ENCODE measurements at regions of chr14 and their contacts with region 1.

Region 1: DNA sequence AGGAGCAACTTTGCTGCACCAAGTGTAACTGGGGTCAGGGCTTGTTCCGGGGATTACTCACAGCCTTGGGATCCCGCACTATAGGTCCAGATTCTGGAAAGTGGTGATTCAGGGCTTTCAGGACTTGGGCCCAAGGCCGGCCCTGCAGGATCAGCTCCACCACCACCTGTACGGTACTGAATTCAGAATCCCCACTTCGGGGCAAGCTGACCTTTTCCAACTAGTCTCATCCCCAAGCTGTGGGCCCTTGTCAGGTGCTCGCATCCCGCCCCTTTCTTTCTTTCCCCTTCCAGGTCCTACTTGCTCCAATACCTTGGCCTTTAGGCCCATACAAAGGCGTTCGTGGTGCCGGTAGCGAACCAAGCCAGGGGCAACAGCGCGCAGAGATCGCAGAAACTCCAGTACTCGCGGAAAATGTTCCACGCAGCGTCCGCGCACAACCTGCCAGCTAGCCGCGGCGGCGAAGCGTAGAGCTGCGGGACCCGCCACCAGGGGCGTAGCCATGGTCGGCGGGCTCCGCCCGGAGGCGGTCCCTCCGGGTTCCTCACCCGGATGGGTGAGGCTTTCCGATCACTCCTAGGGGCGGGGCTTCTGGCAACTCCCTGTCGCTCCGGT is 487 bp downstream of the TINF2 start:
- DNase-seq: peak; percentile 96
- H3K4me3 ChIP-seq: peak overlapping the region; percentile 82
- H3K27ac ChIP-seq: peak overlapping the region; percentile 90
- H3K4me1 ChIP-seq: peaks cover 28% of the 10 kb centered on the region
- CTCF ChIP-seq: peak; percentile 35; the same call in 1 of the 2 replicates

Region 2: GRCh38 chr14:24013654-24014514 is 228.1 kb before region 1 on chr14:
- CTCF ChIA-PET with region 1: no interaction called
- POLR2A ChIA-PET with region 1: no interaction called
- intact Hi-C with region 1: loop called (anchors 5 kb)
- DNase-seq: peak; percentile 82
- H3K4me3 ChIP-seq: no peak overlapping the region
- H3K27ac ChIP-seq: no peak overlapping the region
- H3K4me1 ChIP-seq: peaks cover 12% of the 10 kb centered on the region
- CTCF ChIP-seq: peak; percentile 90

Region 3: GRCh38 chr14:24160850-24161804 is 80.8 kb before region 1 on chr14 and contains the start of gene IRF9:
- CTCF ChIA-PET with region 1: no interaction called
- POLR2A ChIA-PET with region 1: no interaction called
- intact Hi-C with region 1: no loop called
- DNase-seq: peak; percentile 95
- H3K4me3 ChIP-seq: peak within 1 kb of the TSS; percentile 70
- H3K27ac ChIP-seq: peak within 1 kb of the TSS; percentile 68
- H3K4me1 ChIP-seq: peaks cover 16% of the 10 kb centered on the region
- CTCF ChIP-seq: peak; percentile 95
- total RNA-seq, gene IRF9: 35.1 and 40.7 TPM in 2 replicates

Region 4: GRCh38 chr14:24215495-24216344 is 26.2 kb before region 1 on chr14 and contains the start of gene MDP1:
- CTCF ChIA-PET with region 1: interaction called, 3 read pairs
- POLR2A ChIA-PET with region 1: interaction called, 12 read pairs
- intact Hi-C with region 1: no loop called
- DNase-seq: peak; percentile 93
- H3K4me3 ChIP-seq: peak within 1 kb of the TSS; percentile 76
- H3K27ac ChIP-seq: peak within 1 kb of the TSS; percentile 70
- H3K4me1 ChIP-seq: peaks cover 28% of the 10 kb centered on the region
- CTCF ChIP-seq: peak; percentile 85
- total RNA-seq, gene MDP1: 21.5 and 23.2 TPM in 2 replicates

Region 5: DNA sequence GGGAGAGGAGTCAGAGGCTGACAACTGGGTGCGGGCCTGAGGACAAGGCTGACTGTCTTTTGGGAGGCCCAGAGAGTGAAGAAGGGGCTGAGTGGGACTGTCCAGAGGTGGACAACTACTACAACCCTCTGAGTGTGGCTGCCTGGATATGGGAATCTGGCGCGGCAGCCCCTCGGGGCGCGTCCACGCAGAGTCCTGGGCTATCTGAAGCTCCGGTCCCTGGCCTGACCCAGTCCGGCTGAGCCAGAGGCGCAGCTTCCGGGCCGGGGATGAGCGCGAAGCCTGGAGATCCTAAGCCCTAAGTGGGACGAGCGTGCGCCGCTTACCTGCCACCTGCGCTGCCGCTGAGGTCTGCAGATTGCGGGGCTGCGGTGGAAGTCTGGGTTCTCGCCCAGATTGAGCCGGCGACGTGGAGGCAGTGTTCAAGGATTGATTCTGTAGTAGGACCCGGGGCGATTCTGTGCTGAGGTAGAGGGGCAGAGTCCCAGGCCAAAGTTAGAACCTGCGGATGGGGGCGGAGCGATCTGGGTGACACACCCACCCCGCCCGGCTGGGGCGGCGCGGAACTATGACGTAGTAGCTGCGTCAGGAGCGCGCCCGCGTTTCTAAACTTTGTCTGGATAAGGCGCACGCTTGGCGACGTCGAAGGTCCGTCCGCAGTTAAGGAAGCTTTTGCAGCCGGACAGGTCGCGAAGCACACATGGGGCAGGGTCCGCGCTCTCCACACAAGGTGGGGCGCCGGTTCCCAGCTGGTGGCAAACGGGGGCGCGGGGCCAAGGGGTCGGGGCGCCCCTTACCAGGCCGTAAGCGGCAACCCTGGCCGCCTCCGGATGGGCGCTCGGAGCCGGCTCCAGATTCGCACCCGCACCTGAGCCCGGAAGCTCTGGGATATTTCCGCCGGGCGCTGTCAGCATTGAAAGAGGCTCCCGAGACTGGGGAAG is 57.6 kb after region 1 on chr14 and contains the starts of genes DHRS1 and NOP9:
- CTCF ChIA-PET with region 1: interaction called, 6 read pairs
- POLR2A ChIA-PET with region 1: interaction called, 25 read pairs
- intact Hi-C with region 1: loop called (anchors 1 kb)
- DNase-seq: peak; percentile 94
- H3K4me3 ChIP-seq: peak within 1 kb of the TSS; percentile 99
- H3K27ac ChIP-seq: peak within 1 kb of the TSS; percentile 38
- H3K4me1 ChIP-seq: peaks cover 30% of the 10 kb centered on the region
- CTCF ChIP-seq: no peak
- total RNA-seq, gene DHRS1: 21.0 and 27.4 TPM in 2 replicates
- total RNA-seq, gene NOP9: 30.6 and 33.2 TPM in 2 replicates

Region 6: DNA sequence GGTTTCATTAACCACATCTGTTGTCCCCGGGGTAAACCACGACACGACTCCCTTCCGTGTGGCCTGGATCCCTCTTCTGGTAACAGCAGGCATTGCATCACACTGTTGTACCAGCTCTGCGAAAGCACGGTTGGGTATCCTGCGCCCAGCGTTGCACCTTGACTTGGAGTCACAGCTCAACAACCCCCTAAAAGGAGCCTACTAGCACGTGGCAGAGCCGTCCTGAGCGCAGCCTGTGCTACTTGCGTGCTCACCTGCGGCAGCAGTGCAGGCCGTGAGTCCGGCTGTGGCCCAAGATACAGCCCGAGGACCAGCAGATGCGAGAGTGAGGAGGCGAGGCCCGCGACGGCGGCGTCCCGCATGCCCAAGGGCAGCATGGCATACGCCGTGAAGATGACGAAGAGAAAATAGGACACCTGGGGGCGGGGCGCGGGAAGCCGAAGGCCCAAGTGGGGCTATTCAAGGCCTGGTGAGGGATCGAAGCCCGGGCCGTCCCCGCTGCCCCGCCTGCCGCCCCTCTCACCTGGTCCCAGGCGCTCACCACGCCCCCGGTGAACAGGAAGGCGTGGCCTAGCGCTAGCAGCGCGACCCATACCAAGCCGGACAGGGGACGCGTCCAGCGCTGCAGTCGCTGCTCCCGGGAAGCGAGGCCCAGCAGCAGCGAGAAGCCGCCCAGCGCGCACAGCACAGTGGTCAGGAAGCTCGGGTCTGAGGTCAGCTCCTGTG is 90.5 kb after region 1 on chr14:
- CTCF ChIA-PET with region 1: no interaction called
- POLR2A ChIA-PET with region 1: no interaction called
- intact Hi-C with region 1: loop called (anchors 1 kb)
- DNase-seq: peak; percentile 92
- H3K4me3 ChIP-seq: peak overlapping the region; percentile 26
- H3K27ac ChIP-seq: no peak overlapping the region
- H3K4me1 ChIP-seq: peaks cover 26% of the 10 kb centered on the region
- CTCF ChIP-seq: peak; percentile 84

Region 7: DNA sequence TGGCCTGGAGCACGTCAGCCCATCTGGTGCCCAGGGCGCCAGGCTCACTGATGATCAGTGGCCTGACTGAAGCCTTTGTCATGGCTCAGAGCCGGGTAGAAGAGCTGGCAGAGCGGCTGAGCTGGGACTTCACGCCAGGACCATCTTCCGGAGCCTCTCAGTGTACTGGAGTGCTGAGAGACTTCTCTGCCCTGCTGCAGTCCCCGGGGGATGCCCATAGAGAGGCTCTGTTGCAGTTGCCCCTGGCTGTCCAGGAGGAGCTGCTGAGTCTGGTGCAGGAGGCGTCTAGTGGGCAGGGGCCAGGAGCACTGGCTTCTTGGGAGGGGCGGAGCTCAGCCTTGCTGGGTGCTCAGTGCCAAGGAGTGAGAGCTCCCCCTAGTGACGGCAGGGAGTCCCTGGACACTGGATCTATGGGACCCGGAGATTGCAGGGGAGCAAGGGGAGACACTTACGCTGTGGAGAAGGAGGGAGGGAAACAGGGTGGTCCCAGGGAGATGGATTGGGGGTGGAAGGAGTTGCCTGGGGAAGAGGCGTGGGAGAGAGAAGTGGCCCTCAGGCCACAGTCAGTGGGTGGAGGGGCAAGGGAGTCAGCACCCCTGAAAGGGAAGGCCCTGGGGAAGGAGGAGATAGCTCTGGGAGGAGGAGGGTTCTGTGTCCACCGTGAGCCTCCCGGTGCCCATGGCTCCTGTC is 189.8 kb after region 1 on chr14:
- CTCF ChIA-PET with region 1: no interaction called
- POLR2A ChIA-PET with region 1: no interaction called
- intact Hi-C with region 1: loop called (anchors 2 kb)
- DNase-seq: peak; percentile 95
- H3K4me3 ChIP-seq: peak overlapping the region; percentile 82
- H3K27ac ChIP-seq: peak overlapping the region; percentile 68
- H3K4me1 ChIP-seq: peaks cover 39% of the 10 kb centered on the region
- CTCF ChIP-seq: peak; percentile 97

Measured in OCI-LY7 (cell line).